Motor neuron (in vitro differentiated cells): ENCODE measurements at regions of chr14 and their contacts with region 1.

Region 1: GRCh38 chr14:24734878-24735500 is 101.0 kb upstream of the GZMB start:
- ATAC-seq: peak; percentile 75 to 98 (median 88)
- H3K4me3 ChIP-seq: no peak overlapping the region
- H3K27ac ChIP-seq: no peak overlapping the region
- H3K4me1 ChIP-seq: peaks cover 0 to 2% of the 10 kb centered on the region in 2 donors

Region 2: DNA sequence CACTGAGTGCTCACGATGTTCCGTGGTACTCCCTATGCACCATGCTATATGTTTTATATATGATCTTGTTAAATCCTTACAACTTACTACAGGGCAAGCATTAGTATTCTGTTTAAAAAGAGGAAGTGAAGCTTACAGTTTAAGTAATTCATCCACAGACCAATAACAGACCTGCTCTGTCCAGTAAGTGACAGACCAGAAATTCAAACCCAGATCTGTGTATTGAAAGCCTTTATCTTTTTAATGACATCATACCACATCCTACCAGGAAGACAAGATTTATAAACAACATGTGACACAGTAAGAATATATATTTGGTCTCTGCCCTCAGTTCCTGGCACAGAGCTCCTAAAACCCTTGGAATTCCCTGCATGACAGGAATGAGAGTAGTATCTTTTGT is 108.5 kb after region 1 on chr14:
- in situ Hi-C with region 1: no loop called
- ATAC-seq: no peak
- H3K4me3 ChIP-seq: no peak overlapping the region
- H3K27ac ChIP-seq: no peak overlapping the region
- H3K4me1 ChIP-seq: no peaks in the 10 kb centered on the region

Region 3: GRCh38 chr14:25132732-25133422 is 397.9 kb after region 1 on chr14:
- in situ Hi-C with region 1: loop called in 3 of 9 experiments (anchors 25 kb)
- ATAC-seq: peak; percentile 86 to 99 (median 96)
- H3K4me3 ChIP-seq: no peak overlapping the region
- H3K27ac ChIP-seq: no peak overlapping the region
- H3K4me1 ChIP-seq: no peaks in the 10 kb centered on the region

Region 4: GRCh38 chr14:25150934-25151790 is 416.2 kb after region 1 on chr14:
- in situ Hi-C with region 1: loop called in 4 of 9 experiments (anchors 25 kb)
- ATAC-seq: peak in 2 of 8 experiments; percentile 23 to 43
- H3K4me3 ChIP-seq: no peak overlapping the region
- H3K27ac ChIP-seq: no peak overlapping the region
- H3K4me1 ChIP-seq: no peaks in the 10 kb centered on the region

Region 5: GRCh38 chr14:25381464-25381863 is 646.5 kb after region 1 on chr14:
- in situ Hi-C with region 1: loop called in 1 of 9 experiments (anchors 25 kb)
- ATAC-seq: peak in 1 of 8 experiments; percentile 36
- H3K4me3 ChIP-seq: no peak overlapping the region
- H3K27ac ChIP-seq: no peak overlapping the region
- H3K4me1 ChIP-seq: no peaks in the 10 kb centered on the region

Region 6: GRCh38 chr14:25400607-25401206 is 665.7 kb after region 1 on chr14:
- in situ Hi-C with region 1: loop called in 2 of 9 experiments (anchors 25 kb)
- ATAC-seq: peak in 7 of 8 experiments; percentile 13 to 54 (median 35)
- H3K4me3 ChIP-seq: no peak overlapping the region
- H3K27ac ChIP-seq: no peak overlapping the region
- H3K4me1 ChIP-seq: peaks cover 0 to 3% of the 10 kb centered on the region in 2 donors